GM10248 (cell line): ENCODE measurements at regions of chr1 and their contacts with region 1.

Region 1: GRCh38 chr1:95043141-95043980 is 29.4 kb downstream of the ALG14 start:
- DNase-seq: peak; percentile 70
- CTCF ChIP-seq: peak; percentile 99

Region 2: GRCh38 chr1:94843430-94843829 is 199.9 kb before region 1 on chr1:
- CTCF ChIA-PET with region 1: interaction called, 16 read pairs
- POLR2A ChIA-PET with region 1: no interaction called
- DNase-seq: no peak
- CTCF ChIP-seq: no peak

Region 3: DNA sequence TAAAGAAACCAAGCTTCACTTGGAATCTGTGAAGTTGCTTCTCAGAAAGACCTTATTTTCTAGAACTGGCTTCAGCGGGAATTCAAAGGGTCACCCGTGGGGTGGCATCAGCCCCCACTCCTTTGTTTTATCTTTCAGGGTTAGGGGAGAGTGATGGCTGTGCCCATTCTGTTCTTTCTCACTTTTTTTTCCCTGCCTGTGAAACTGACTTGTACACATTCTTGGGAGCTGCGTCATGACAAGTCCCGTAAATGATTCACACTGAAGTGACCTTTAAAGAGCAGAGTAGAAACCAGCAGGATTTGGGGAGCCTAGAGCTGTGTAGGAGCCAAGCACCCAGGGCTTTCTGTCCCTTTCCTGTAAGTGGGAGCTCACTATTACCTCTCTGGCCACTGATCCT is 179.4 kb before region 1 on chr1:
- CTCF ChIA-PET with region 1: interaction called, 16 read pairs
- POLR2A ChIA-PET with region 1: no interaction called
- DNase-seq: no peak
- CTCF ChIP-seq: no peak

Region 4: GRCh38 chr1:95013950-95014574 is 29.3 kb before region 1 on chr1:
- CTCF ChIA-PET with region 1: interaction called, 12 read pairs
- POLR2A ChIA-PET with region 1: no interaction called
- DNase-seq: no peak
- CTCF ChIP-seq: no peak

Region 5: DNA sequence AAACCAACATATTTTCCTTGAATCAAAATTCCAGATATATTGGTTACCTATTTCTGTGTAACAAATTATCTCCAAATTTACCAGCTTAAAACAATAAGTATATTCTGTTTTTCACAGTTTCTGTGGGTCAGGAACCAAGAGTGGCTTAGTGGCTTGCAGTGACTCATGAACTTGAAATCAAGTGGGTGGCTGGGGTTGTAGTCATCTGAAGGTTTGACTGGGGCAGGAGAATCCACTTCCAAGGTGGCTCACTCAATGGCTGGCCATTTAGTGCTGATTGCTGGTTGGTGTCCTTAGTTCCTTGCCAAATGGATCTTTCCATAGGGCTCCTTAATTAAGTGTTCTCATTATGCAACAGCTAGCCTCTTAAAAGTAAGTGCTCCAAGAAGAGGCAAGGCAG is 14.4 kb before region 1 on chr1:
- CTCF ChIA-PET with region 1: interaction called, 42 read pairs
- POLR2A ChIA-PET with region 1: no interaction called
- DNase-seq: no peak
- CTCF ChIP-seq: no peak

Region 6: DNA sequence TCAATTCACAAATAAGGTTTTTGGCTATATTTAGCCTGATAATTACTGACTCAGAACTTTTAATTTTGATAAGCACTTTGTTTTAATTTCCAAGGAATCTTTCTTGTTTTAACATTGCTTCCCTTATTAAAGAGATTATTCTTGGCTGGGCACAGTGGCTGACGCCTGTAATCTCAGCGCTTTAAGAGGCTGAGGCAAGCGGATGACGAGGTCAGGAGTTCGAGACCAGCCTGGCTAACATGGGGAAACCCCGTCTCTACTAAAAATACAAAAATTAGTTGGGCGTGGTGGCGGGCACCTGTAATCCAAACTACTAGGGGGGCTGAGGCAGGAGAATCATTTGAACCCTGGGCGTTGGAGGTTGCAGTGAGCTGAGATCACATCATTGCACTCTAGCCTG is 15.6 kb after region 1 on chr1:
- CTCF ChIA-PET with region 1: interaction called, 19 read pairs
- POLR2A ChIA-PET with region 1: no interaction called
- DNase-seq: no peak
- CTCF ChIP-seq: no peak